ENCODE measurements at regions of chr15 and their contacts with region 1.

Region 1: GRCh38 chr15:38699633-38700230 is 135.1 kb upstream of the RASGRP1 start:
- DNase-seq: peak; percentile 89
- ATAC-seq: peak; percentile 35
- H3K4me3 Mint-ChIP-seq: peak overlapping the region; percentile 86
- H3K27ac Mint-ChIP-seq: peak overlapping the region; percentile 84
- H3K4me1 Mint-ChIP-seq: peaks cover 69% of the 10 kb centered on the region
- H3K27me3 Mint-ChIP-seq: no peaks in the 10 kb centered on the region

Region 2: GRCh38 chr15:38344351-38344750 is 355.4 kb before region 1 on chr15:
- CTCF ChIA-PET with region 1: no interaction called
- DNase-seq: no peak
- ATAC-seq: no peak
- H3K4me3 Mint-ChIP-seq: no peak overlapping the region
- H3K27ac Mint-ChIP-seq: no peak overlapping the region
- H3K4me1 Mint-ChIP-seq: no peaks in the 10 kb centered on the region
- H3K27me3 Mint-ChIP-seq: peaks cover 28% of the 10 kb centered on the region

Region 3: DNA sequence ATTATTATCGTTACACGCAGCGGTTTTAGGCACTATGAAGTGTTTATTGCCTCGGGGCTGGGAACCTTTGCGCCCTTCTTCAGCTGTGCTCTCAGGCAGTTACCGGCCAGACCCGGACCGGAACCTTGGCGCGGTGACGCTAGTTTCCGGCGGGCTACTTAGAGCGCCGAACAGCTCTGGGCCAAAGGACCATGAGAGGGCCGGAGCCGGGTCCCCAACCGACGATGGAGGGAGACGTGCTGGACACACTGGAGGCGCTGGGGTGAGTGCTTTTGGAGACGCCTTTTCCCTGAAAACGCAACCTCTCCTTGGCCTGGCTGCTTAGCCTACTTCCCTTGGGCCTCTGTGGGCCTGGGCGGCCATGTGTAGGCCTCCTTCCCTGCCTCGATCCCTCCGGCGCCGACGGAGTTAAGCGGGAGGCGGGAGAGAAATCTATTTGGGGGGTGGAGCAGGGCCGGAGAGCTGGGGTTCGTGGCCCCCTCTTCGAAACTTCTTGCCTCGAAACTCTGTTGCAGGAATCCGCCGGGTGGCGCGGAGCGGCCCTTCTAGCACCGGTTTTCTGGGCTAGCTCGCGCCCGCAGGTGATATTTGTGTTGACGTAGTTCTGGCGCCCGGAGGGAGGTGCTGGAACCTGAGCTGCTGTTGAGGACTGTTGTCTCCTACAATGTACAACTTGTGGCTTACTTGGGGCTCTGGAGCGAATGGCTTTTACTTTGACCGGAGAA is 245.6 kb before region 1 on chr15 and contains the start of gene FAM98B:
- CTCF ChIA-PET with region 1: interaction called, 50 read pairs
- DNase-seq: peak; percentile 92
- ATAC-seq: peak; percentile 96
- H3K4me3 Mint-ChIP-seq: peak within 1 kb of the TSS; percentile 94
- H3K27ac Mint-ChIP-seq: peak within 1 kb of the TSS; percentile 92
- H3K4me1 Mint-ChIP-seq: peaks cover 34% of the 10 kb centered on the region
- H3K27me3 Mint-ChIP-seq: peaks cover 15% of the 10 kb centered on the region
- total RNA-seq, gene FAM98B: 34.8 to 41.4 TPM

Region 4: DNA sequence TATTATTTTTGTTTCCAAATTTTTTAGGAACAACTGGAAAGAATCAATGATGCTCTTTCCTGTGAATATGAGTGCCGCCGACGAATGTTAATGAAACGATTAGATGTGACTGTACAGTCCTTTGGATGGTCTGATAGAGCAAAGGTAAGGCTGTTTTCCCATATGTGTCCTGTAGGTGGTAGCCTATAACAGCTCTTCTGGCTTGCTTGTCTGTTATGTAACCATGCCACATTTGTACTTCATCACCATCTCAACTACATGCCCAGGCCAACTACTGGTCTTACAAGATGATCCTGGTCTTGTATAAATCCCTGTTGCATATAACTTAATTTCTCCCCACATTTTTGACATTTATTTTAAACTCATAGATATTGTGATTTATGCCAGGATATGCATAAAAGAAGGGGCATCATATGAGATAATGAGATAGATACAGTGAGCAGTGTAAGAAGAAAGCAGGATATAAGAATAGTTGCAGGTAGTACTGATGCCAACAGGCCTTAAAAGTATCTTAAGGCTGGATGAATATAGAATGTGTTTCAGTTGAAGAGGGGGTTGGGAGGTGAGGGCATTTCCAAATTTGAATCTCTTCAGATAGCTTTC is 225.5 kb before region 1 on chr15:
- CTCF ChIA-PET with region 1: interaction called, 79 read pairs
- DNase-seq: peak; percentile 48
- ATAC-seq: peak; percentile 98
- H3K4me3 Mint-ChIP-seq: no peak overlapping the region
- H3K27ac Mint-ChIP-seq: peak overlapping the region; percentile 30
- H3K4me1 Mint-ChIP-seq: peaks cover 6% of the 10 kb centered on the region
- H3K27me3 Mint-ChIP-seq: no peaks in the 10 kb centered on the region

Region 5: DNA sequence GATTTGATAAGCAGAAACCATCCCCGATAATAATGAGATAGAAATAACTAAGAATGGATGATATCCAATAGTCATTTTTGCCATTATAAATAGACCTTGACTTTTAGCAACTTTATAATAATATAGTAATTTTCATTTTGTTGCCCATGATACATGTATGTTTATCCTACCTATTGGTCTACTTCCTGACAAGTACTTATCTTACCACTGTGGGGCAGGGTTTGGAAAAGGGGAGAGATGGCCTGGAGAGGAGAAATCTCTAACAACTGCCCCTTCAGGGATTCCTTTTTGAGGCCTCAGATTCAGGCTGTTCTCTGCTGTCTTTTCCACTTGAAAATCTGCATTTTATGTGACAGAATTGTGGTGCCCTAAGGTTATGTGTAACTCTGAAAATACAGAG is 203.6 kb before region 1 on chr15:
- CTCF ChIA-PET with region 1: interaction called, 12 read pairs
- DNase-seq: no peak
- ATAC-seq: no peak
- H3K4me3 Mint-ChIP-seq: no peak overlapping the region
- H3K27ac Mint-ChIP-seq: peak overlapping the region; percentile 45
- H3K4me1 Mint-ChIP-seq: peaks cover 23% of the 10 kb centered on the region
- H3K27me3 Mint-ChIP-seq: no peaks in the 10 kb centered on the region

Region 6: GRCh38 chr15:38638811-38639210 is 60.9 kb before region 1 on chr15:
- CTCF ChIA-PET with region 1: no interaction called
- DNase-seq: no peak
- ATAC-seq: no peak
- H3K4me3 Mint-ChIP-seq: no peak overlapping the region
- H3K27ac Mint-ChIP-seq: no peak overlapping the region
- H3K4me1 Mint-ChIP-seq: peaks cover 32% of the 10 kb centered on the region
- H3K27me3 Mint-ChIP-seq: no peaks in the 10 kb centered on the region

Region 7: GRCh38 chr15:38683382-38684242 is 16.1 kb before region 1 on chr15:
- CTCF ChIA-PET with region 1: interaction called, 207 read pairs
- DNase-seq: peak; percentile 89
- ATAC-seq: peak; percentile 73
- H3K4me3 Mint-ChIP-seq: peak overlapping the region; percentile 37
- H3K27ac Mint-ChIP-seq: peak overlapping the region; percentile 96
- H3K4me1 Mint-ChIP-seq: peaks cover 70% of the 10 kb centered on the region
- H3K27me3 Mint-ChIP-seq: no peaks in the 10 kb centered on the region

Region 8: DNA sequence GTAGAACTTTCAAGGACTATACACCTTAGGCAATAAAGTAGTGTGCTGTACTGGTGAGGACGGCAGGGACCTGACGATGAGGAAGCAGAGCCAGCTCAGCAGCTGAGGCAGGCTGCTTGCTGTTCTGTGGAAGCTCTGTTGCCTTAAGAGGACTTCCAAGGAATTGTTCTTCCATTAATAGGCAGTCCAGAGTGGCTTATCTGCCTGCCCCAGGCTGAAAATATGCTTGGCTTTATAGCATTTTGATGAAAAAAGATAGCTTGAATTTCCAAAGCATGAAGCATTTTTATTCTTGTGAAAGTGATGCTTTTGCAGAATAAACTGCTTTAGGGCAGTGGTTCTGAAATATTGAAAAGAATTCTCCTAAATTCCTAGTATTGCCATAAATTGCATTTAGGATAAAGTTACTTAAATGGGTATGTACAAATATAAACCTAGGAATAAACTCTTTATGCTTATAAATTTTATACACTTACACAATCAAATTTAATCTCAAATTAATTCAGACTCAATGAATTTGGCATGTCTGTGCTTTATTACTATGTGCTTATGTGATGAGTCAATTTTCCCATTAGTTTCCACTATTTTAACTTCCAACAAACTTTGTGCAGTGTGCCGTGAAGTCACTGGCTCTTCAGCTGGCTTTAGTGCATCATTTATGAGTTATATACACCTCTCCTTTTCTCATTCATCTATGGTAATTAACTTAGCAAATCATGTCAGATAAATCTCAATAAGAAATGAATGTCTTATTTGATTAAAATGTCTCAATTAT is 95.9 kb after region 1 on chr15:
- CTCF ChIA-PET with region 1: no interaction called
- DNase-seq: no peak
- ATAC-seq: no peak
- H3K4me3 Mint-ChIP-seq: no peak overlapping the region
- H3K27ac Mint-ChIP-seq: no peak overlapping the region
- H3K4me1 Mint-ChIP-seq: no peaks in the 10 kb centered on the region
- H3K27me3 Mint-ChIP-seq: peaks cover 38% of the 10 kb centered on the region

Measured in activated CD8-positive, alpha-beta memory T cell treated with anti-CD3 and anti-CD28 coated beads, Interleukin-2, amount 10 ng/mL, durations not matched to agents 7 days and 5 days (primary cell).